ENCODE measurements at regions of chr10 and their contacts with region 1.

Region 1: DNA sequence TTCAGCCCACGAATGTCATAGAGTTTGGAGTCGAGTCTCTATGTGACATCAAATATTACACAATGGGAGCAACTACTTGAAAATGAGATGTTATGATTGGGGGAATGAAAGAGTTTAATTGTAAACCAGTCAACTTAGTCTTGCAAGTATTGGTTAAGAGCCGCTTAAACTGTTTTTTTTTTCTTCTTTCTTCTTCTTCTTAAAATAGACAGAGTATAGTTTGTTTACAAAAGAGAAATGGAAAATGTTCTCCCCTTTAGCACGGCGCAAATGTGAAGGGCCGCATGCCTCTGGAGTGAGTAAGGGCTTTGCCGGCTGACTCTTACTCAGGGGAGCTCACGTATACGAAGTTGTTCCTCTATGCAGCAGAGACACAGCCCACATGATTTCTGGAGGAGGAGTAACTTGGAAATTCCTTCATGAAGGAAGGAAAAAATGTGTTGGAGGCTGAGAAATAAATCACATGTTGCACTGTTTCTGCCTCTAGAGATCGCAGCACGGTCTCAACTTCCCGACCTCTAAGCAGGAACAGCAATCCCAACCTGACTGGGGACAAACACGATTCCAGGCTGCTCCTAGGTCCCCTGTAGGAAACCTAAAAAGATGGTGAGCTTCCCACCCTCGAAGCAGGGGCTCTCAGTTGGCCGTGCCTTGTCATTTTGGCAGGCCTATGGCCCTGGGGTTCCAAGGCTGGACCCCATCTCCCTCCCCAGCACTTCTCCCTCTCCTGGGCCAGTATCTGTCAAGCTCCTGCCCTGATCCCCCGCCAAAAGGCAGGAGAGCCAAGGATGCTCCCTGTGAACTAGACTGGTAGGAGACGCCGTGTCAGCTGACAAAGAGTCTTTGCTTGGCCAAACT is 44.8 kb downstream of the MYOF start:
- DNase-seq: peak in 1 of 3 donors; percentile 49
- ATAC-seq: peak; percentile 60
- H3K4me3 ChIP-seq: no peak overlapping the region
- H3K4me1 ChIP-seq: peaks cover 22% of the 10 kb centered on the region
- CTCF ChIP-seq: no peak

Region 2: DNA sequence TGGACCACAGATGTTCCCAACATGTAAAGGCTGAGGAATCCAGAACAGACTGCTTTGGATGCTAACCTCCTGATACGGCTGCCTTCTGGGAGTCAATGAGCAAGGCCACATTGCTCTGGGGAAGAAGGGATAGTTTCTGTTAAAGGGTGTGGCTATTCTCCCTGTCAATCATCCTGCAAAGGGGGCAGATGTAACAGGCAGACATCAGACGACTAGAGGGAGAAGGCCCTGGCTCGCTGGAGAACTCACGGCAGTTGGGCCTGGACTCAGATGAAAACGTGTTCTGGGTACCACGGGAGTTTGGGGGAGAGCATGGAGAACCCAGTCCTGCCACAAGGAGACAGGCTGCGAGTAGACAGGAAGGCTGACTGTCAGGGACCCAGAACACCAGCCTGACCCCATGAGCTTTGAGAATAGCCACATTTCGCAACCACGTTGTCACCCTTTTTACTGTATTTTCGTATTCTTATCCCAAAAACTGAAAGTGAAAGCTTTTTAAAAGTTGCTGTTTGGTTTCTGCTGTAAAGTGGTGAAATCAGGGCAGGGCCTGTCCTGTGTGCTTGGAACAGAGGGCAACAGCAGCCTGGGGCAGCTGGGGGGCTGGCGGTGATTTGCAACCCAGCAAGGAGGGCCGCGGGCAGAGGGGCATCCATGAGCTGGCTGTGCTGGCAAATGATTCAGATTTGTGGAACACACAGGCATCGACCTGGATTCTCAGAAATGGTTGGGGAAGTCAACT is 50.5 kb before region 1 on chr10:
- intact Hi-C with region 1: loop called in 1 of 2 experiments (anchors 10 kb)
- DNase-seq: peak in 2 of 3 donors; percentile 28 to 50
- ATAC-seq: peak; percentile 47
- H3K4me3 ChIP-seq: no peak overlapping the region
- H3K4me1 ChIP-seq: no peaks in the 10 kb centered on the region
- CTCF ChIP-seq: no peak

Region 3: DNA sequence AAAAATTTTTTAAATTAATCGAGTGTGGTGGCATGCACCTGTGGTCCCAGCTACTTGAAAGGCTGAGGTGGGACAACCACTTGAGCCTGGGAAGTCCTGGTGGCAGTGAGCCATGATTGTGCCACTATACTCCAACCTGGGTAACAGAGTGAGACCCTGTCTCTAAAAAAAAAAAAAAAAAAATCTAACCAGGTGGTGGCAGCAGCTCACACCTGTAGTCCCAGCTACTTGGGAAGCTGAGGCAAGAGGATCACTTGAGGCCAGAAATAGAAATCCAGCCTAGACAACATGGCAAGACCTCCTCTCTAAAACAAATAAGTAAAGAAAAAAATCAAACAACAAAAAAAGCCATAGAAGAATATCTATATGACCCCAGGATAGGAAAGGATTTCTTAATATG is 48.4 kb after region 1 on chr10:
- intact Hi-C with region 1: no loop called
- DNase-seq: no peak
- ATAC-seq: no peak
- H3K4me3 ChIP-seq: no peak overlapping the region
- H3K4me1 ChIP-seq: no peaks in the 10 kb centered on the region
- CTCF ChIP-seq: no peak

Region 4: GRCh38 chr10:93600446-93601145 is 163.3 kb after region 1 on chr10:
- intact Hi-C with region 1: no loop called
- DNase-seq: peak; percentile 35 to 59 (median 55)
- ATAC-seq: peak; percentile 85
- H3K4me3 ChIP-seq: no peak overlapping the region
- H3K4me1 ChIP-seq: no peaks in the 10 kb centered on the region
- CTCF ChIP-seq: no peak

Measured in mucosa of descending colon (tissue), 3 donors.